ENCODE measurements at regions of chr4 and their contacts with region 1.

Region 1: GRCh38 chr4:68498413-68499007 is 51.2 kb downstream of the TMPRSS11E start:
- DNase-seq: peak; percentile 30
- ATAC-seq: peak; percentile 97
- H3K4me3 ChIP-seq: no peak overlapping the region
- H3K27ac ChIP-seq: no peak overlapping the region
- H3K4me1 ChIP-seq: 0 out of 2 replicates have a peak, but pooled peaks cover 3% of the 10 kb centered on the region
- H3K27me3 ChIP-seq: no peaks in the 10 kb centered on the region
- CTCF ChIP-seq: peak; percentile 74 to 93 (median 86)
- EP300 ChIP-seq: no peak
- POLR2A ChIP-seq: no peak
- RAD21 ChIP-seq: peak; percentile 100

Region 2: DNA sequence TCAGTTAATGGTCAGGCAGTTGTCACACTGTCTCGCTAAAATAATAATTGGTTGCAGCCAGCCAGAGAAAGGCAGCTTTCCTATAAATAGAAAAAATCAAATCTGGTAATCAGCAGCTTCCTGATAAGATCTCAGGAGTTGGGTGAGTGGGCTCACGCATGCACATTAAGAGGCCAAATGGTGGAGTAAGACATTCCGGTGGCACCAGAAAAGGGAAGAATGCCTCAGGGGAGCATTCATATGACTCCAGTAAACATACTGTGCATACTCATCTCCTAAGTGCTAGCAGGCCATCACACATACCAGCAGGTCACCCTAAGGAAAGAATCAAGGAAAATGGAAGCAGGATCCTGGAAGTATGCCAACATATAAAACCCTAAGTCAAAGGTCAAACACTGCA is 131.9 kb after region 1 on chr4:
- CTCF ChIA-PET with region 1: interaction called, 9 read pairs
- POLR2A ChIA-PET with region 1: no interaction called
- RAD21 ChIA-PET with region 1: no interaction called
- SMC1A ChIA-PET with region 1: interaction called, 6 read pairs
- in situ Hi-C with region 1: loop called (anchors 25 kb)
- intact Hi-C with region 1: loop called (anchors 10 kb)
- DNase-seq: no peak
- ATAC-seq: no peak
- H3K4me3 ChIP-seq: no peak overlapping the region
- H3K27ac ChIP-seq: no peak overlapping the region
- H3K4me1 ChIP-seq: no peaks in the 10 kb centered on the region
- H3K27me3 ChIP-seq: no peaks in the 10 kb centered on the region
- CTCF ChIP-seq: no peak
- EP300 ChIP-seq: no peak
- POLR2A ChIP-seq: no peak
- RAD21 ChIP-seq: no peak

Region 3: DNA sequence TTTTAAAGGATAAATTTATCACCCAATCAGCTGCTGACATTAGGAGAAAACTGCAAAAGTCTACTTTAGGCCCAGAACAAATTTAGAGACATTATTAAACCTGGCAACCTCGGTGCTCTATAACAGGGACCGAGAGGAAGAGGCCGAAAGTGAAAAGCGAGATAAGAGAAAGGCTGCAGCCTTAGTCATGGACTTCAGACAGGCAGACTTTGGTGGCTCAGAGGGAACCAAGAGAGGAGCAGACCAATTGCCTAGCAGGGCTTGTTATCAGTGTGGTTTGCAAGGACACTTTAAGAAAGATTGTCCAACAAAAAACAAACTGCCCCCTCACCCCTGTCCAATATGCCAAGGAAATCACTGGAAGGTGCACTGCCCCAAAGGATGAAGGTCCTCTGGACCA is 304.5 kb after region 1 on chr4:
- CTCF ChIA-PET with region 1: no interaction called
- POLR2A ChIA-PET with region 1: no interaction called
- RAD21 ChIA-PET with region 1: no interaction called
- SMC1A ChIA-PET with region 1: no interaction called
- in situ Hi-C with region 1: no loop called
- intact Hi-C with region 1: loop called (anchors 10 kb)
- DNase-seq: no peak
- ATAC-seq: no peak
- H3K4me3 ChIP-seq: no peak overlapping the region
- H3K27ac ChIP-seq: no peak overlapping the region
- H3K4me1 ChIP-seq: no peaks in the 10 kb centered on the region
- H3K27me3 ChIP-seq: no peaks in the 10 kb centered on the region
- CTCF ChIP-seq: no peak
- EP300 ChIP-seq: no peak
- POLR2A ChIP-seq: no peak
- RAD21 ChIP-seq: no peak

Region 4: GRCh38 chr4:69025191-69025998 is 526.9 kb after region 1 on chr4:
- CTCF ChIA-PET with region 1: interaction called, 14 read pairs
- POLR2A ChIA-PET with region 1: interaction called, 5 read pairs
- RAD21 ChIA-PET with region 1: interaction called, 12 read pairs
- SMC1A ChIA-PET with region 1: interaction called, 27 read pairs
- in situ Hi-C with region 1: loop called (anchors 25 kb)
- intact Hi-C with region 1: loop called (anchors 1 kb)
- DNase-seq: no peak
- ATAC-seq: peak; percentile 92
- H3K4me3 ChIP-seq: no peak overlapping the region
- H3K27ac ChIP-seq: no peak overlapping the region
- H3K4me1 ChIP-seq: no peaks in the 10 kb centered on the region
- H3K27me3 ChIP-seq: no peaks in the 10 kb centered on the region
- CTCF ChIP-seq: peak; percentile 19 to 54 (median 30); a peak in 4 of 6 replicates
- EP300 ChIP-seq: no peak
- POLR2A ChIP-seq: no peak
- RAD21 ChIP-seq: peak; percentile 57

Region 5: DNA sequence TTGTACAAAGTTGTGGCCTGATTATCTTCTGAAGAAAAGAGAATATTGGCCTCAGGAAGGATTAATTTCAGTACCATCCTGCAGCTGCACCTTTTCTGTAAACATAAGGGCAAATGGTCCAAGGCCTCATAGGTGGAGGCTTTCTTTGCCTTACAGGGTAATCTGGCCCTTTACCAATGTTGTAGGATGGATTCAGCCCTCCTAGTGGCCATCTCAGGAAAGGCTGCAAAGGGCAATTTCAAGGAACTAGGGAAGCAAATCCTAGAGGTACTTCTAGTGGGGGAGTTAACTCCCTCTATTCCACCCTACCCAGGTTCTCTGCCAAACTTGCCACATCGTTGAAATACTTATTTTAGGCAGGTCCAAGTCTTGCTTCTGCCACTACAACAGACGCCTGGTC is 658.4 kb after region 1 on chr4:
- CTCF ChIA-PET with region 1: interaction called, 5 read pairs
- POLR2A ChIA-PET with region 1: no interaction called
- RAD21 ChIA-PET with region 1: no interaction called
- SMC1A ChIA-PET with region 1: interaction called, 3 read pairs
- in situ Hi-C with region 1: loop called (anchors 25 kb)
- intact Hi-C with region 1: no loop called
- DNase-seq: no peak
- ATAC-seq: 0 out of 3 replicates have a peak, but pooled peaks have one; percentile 23
- H3K4me3 ChIP-seq: no peak overlapping the region
- H3K27ac ChIP-seq: no peak overlapping the region
- H3K4me1 ChIP-seq: no peaks in the 10 kb centered on the region
- H3K27me3 ChIP-seq: no peaks in the 10 kb centered on the region
- CTCF ChIP-seq: peak in 2 of 3 experiments; percentile 31 to 33; a peak in 3 of 6 replicates
- EP300 ChIP-seq: no peak
- POLR2A ChIP-seq: no peak
- RAD21 ChIP-seq: 0 out of 2 replicates have a peak, but pooled peaks have one; percentile 2

Region 6: DNA sequence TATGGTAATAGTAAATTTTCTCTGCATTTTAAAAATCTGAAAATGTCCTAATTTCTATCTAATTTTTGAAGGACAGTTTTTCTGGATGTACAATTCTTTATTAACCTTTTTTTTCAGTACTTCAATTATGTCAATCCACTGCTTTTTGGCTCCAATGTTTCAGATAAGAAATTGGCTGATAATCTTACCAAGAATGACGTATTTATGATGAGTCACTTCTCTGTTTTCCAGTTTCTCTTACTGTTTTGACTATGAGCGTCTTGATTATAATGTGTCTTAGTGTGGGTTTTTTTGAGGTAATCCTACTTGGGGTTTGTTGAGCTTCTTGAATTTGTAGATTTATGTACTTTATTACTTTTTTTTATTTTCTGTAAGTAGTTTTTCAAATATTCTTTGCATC is 668.8 kb after region 1 on chr4:
- CTCF ChIA-PET with region 1: interaction called, 22 read pairs
- POLR2A ChIA-PET with region 1: no interaction called
- RAD21 ChIA-PET with region 1: interaction called, 18 read pairs
- SMC1A ChIA-PET with region 1: interaction called, 37 read pairs
- in situ Hi-C with region 1: loop called (anchors 25 kb)
- intact Hi-C with region 1: loop called (anchors 1 kb)
- DNase-seq: no peak
- ATAC-seq: no peak
- H3K4me3 ChIP-seq: no peak overlapping the region
- H3K27ac ChIP-seq: no peak overlapping the region
- H3K4me1 ChIP-seq: no peaks in the 10 kb centered on the region
- H3K27me3 ChIP-seq: no peaks in the 10 kb centered on the region
- CTCF ChIP-seq: no peak
- EP300 ChIP-seq: no peak
- POLR2A ChIP-seq: no peak
- RAD21 ChIP-seq: no peak

Region 7: DNA sequence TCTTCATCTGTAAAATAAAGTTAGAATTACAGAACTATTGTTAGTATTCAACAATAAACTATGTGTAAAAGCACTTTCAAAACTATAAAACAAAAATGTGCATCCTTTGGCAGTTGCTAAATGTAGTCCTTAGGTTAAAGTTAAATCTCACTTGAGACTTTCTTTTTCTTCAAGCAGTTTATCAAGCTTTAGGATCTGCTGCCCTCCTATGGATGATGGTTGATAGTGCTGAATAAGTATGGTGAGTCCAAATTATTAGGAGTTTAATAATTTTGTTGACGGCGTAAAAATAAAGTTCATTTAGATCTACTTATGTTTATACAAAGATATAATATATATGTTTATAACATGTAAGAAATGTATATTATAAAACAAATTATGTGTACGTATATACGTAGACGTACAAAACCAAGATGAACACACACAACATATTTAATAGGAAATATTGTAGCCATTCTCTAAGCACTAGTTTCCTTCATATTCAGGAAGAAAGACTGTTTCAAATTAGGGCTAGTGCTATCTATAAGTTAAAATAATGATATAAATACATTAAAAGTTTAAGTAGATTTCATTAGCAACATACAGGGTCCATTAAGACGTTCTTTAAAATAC is 1118.7 kb after region 1 on chr4:
- CTCF ChIA-PET with region 1: interaction called, 5 read pairs
- POLR2A ChIA-PET with region 1: no interaction called
- RAD21 ChIA-PET with region 1: interaction called, 3 read pairs
- SMC1A ChIA-PET with region 1: interaction called, 5 read pairs
- in situ Hi-C with region 1: loop called (anchors 25 kb)
- intact Hi-C with region 1: no loop called
- DNase-seq: no peak
- ATAC-seq: peak; percentile 50; the same call in 2 of the 3 replicates
- H3K4me3 ChIP-seq: no peak overlapping the region
- H3K27ac ChIP-seq: no peak overlapping the region
- H3K4me1 ChIP-seq: no peaks in the 10 kb centered on the region
- H3K27me3 ChIP-seq: no peaks in the 10 kb centered on the region
- CTCF ChIP-seq: peak; percentile 30 to 46 (median 31); a peak in 4 of 6 replicates
- EP300 ChIP-seq: no peak
- POLR2A ChIP-seq: no peak
- RAD21 ChIP-seq: peak; percentile 70